Esophagus squamous epithelium (tissue), 5 donors: ENCODE measurements at regions of chr7 and their contacts with region 1.

Region 1: DNA sequence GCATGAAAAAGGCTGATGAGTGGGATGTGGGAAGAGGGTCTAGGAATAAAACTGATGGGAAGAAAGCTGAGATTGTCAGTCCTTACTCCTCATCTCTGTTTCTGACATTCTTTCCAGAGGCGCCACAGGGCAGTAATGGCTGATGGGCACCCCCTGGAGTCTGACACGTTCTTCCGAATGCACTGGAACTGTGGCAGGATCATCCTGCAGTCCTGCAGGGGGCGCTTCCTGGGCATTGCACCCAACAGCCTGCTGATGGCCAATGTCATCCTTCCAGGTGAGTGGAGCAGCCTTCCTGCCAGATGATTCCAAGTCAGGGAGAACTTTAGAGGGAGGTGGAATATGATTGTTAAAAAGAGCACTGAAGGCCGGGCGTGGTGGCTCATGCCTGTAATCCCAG is 4.8 kb downstream of the FSCN3 start:
- DNase-seq: no peak
- H3K4me3 ChIP-seq: no peak overlapping the region
- H3K27ac ChIP-seq: no peak overlapping the region
- H3K4me1 ChIP-seq: no peaks in the 10 kb centered on the region
- H3K27me3 ChIP-seq: no peaks in the 10 kb centered on the region
- CTCF ChIP-seq: peak in 1 of 6 experiments; percentile 23
- POLR2A ChIP-seq: no peak

Region 2: DNA sequence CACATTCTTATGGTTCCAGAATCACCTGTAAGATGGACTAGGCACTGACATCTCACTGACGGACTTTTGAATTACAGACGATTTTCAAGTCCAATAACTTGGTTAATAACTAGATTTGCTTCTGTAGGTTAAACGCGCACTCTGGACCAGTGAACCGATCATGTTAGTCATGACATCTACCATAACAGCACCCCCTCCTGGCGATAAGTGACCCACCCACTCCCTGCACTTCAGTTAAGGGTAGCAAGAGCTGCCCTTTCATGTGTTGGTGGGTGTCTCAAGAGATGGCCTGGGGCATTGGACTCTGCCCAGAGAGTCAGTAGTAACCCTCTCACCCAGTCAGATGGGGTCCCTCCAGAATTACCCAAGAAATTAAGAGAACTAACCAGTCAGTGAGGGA is 358.5 kb before region 1 on chr7:
- intact Hi-C with region 1: no loop called
- DNase-seq: no peak
- H3K4me3 ChIP-seq: no peak overlapping the region
- H3K27ac ChIP-seq: no peak overlapping the region
- H3K4me1 ChIP-seq: no peaks in the 10 kb centered on the region
- H3K27me3 ChIP-seq: peaks cover 0 to 27% (median 0%) of the 10 kb centered on the region in 4 donors
- CTCF ChIP-seq: no peak
- POLR2A ChIP-seq: no peak

Region 3: GRCh38 chr7:127375631-127376030 is 222.7 kb before region 1 on chr7:
- intact Hi-C with region 1: no loop called
- DNase-seq: no peak
- H3K4me3 ChIP-seq: no peak overlapping the region
- H3K27ac ChIP-seq: no peak overlapping the region
- H3K4me1 ChIP-seq: no peaks in the 10 kb centered on the region
- H3K27me3 ChIP-seq: no peaks in the 10 kb centered on the region
- CTCF ChIP-seq: no peak
- POLR2A ChIP-seq: no peak

Region 4: GRCh38 chr7:127644479-127644878 is 46.2 kb after region 1 on chr7:
- intact Hi-C with region 1: loop called (anchors 10 kb)
- DNase-seq: no peak
- H3K4me3 ChIP-seq: no peak overlapping the region
- H3K27ac ChIP-seq: no peak overlapping the region
- H3K4me1 ChIP-seq: no peaks in the 10 kb centered on the region
- H3K27me3 ChIP-seq: peaks cover 0 to 1% (median 0%) of the 10 kb centered on the region in 4 donors
- CTCF ChIP-seq: no peak
- POLR2A ChIP-seq: no peak